Common myeloid progenitor, CD34-positive (primary cell): ENCODE measurements at regions of chr2 and their contacts with region 1.

Region 1: DNA sequence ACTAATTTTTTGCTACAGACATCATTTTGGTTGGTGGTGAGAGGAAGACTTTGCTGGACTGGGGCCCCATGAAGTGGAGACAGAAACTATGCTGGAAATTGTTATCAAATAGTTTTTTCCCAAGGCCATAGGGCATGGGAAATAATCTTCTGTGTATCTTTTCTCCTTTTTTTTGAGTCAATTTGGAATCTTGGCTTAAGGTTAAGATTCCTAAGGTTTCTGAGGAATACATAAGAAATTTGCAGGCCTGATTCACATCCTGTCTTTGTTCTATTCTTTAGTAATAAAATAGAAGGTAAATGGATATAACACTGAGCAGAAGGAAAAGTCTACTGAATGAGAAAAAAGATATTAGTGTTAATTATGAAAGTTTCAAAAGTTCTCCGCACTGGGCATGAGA is 16.6 kb downstream of the SMC6 start:
- DNase-seq: no peak
- H3K4me3 ChIP-seq: no peak overlapping the region
- H3K27ac ChIP-seq: no peak overlapping the region
- H3K4me1 ChIP-seq: no peaks in the 10 kb centered on the region
- H3K27me3 ChIP-seq: no peaks in the 10 kb centered on the region

Region 2: DNA sequence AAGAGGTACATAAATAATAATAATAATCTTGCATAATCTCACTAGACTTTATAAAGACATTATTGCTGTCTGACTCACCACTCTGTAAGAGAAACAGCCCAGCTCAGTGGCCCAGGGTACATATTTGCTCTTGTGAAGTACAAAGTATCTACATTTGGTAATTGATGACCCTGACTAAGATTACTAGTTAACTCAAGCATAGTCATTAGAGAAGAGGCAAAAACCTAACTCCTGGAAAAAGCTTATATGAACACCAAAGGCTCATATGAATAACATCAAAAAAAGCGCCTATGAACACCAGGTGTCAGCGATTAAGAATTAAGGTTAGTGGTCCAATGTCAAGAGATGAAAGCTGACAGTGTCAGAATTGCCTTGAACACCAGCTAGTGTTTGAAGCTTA is 257.1 kb before region 1 on chr2:
- CTCF ChIA-PET with region 1: no interaction called
- POLR2A ChIA-PET with region 1: no interaction called
- DNase-seq: no peak
- H3K4me3 ChIP-seq: no peak overlapping the region
- H3K27ac ChIP-seq: no peak overlapping the region
- H3K4me1 ChIP-seq: no peaks in the 10 kb centered on the region
- H3K27me3 ChIP-seq: no peaks in the 10 kb centered on the region

Region 3: DNA sequence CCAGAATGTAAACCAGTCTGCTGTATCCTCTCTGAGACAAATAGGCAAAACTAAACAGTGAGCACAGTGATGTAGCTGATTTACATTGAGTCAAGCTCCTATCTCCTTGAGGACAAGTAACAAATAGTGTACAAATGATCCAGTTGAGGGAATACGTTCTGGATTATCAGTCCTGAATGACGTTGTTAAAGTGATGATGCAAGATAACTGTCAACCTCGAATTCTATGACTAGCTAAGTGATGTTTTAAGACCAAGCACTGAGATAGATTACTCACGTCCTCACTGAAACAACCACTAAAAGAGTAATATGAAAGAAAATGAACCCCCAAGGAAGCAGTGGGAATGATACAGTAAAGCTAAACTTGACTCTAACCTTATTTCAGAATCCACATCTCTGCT is 30.1 kb before region 1 on chr2:
- CTCF ChIA-PET with region 1: no interaction called
- POLR2A ChIA-PET with region 1: no interaction called
- DNase-seq: no peak
- H3K4me3 ChIP-seq: no peak overlapping the region
- H3K27ac ChIP-seq: no peak overlapping the region
- H3K4me1 ChIP-seq: no peaks in the 10 kb centered on the region
- H3K27me3 ChIP-seq: no peaks in the 10 kb centered on the region

Region 4: GRCh38 chr2:17719562-17720371 is 17.2 kb before region 1 on chr2:
- CTCF ChIA-PET with region 1: interaction called, 15 read pairs
- POLR2A ChIA-PET with region 1: no interaction called
- DNase-seq: peak; percentile 12 to 41 (median 28)
- H3K4me3 ChIP-seq: no peak overlapping the region
- H3K27ac ChIP-seq: no peak overlapping the region
- H3K4me1 ChIP-seq: no peaks in the 10 kb centered on the region
- H3K27me3 ChIP-seq: no peaks in the 10 kb centered on the region

Region 5: GRCh38 chr2:17759805-17760204 is 22.8 kb after region 1 on chr2:
- CTCF ChIA-PET with region 1: no interaction called
- POLR2A ChIA-PET with region 1: no interaction called
- DNase-seq: no peak
- H3K4me3 ChIP-seq: no peak overlapping the region
- H3K27ac ChIP-seq: no peak overlapping the region
- H3K4me1 ChIP-seq: peaks cover 4 to 20% (median 9%) of the 10 kb centered on the region in 4 experiments
- H3K27me3 ChIP-seq: no peaks in the 10 kb centered on the region

Region 6: GRCh38 chr2:18009891-18010290 is 272.9 kb after region 1 on chr2:
- CTCF ChIA-PET with region 1: no interaction called
- POLR2A ChIA-PET with region 1: no interaction called
- DNase-seq: no peak
- H3K4me3 ChIP-seq: no peak overlapping the region
- H3K27ac ChIP-seq: no peak overlapping the region
- H3K4me1 ChIP-seq: no peaks in the 10 kb centered on the region
- H3K27me3 ChIP-seq: no peaks in the 10 kb centered on the region